Cardiac septum (tissue), 1 donor: ENCODE measurements at regions of chr2 and their contacts with region 1.

Region 1: DNA sequence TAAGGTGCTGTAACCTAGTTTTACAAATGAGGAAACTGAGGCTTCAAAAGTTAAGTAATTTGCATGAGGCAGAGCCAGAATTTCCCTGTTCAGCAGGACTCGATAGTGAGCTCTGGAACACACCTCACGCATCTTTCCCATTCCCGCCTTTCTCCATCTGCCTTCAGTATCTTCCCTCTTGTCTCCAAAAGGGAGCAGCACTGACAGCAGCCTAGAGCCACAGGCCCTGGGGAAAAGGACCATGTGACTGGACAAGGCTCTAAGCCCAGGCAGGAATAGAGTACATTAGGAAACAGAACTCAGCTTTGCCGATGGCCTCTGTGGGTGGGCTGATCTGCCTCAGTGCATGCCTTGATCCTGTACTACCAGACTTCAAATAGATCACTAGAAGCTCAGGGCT is 21.5 kb downstream of the GPR155 start:
- DNase-seq: no peak

Region 2: DNA sequence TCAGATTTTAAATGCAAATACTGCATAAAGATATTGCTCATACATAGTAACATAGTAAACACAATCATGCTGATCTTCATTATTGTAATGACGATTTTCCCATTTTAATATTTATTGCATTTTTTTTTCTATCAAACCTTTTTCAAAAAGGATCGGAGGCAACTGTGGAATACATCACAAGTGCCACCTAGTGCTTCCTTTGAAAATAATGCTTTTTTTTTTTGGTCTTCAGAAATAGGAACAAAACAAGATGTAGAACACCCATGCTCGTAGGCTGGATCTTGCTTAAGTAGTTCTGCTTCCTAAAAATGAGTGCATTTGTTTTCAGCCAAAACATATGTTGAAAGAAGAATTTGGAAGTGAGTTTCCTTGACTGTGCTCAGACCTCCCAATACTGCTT is 57.2 kb after region 1 on chr2:
- intact Hi-C with region 1: loop called (anchors 5 kb)
- DNase-seq: no peak

Region 3: GRCh38 chr2:174536304-174536703 is 71.0 kb after region 1 on chr2:
- intact Hi-C with region 1: no loop called
- DNase-seq: no peak

Region 4: DNA sequence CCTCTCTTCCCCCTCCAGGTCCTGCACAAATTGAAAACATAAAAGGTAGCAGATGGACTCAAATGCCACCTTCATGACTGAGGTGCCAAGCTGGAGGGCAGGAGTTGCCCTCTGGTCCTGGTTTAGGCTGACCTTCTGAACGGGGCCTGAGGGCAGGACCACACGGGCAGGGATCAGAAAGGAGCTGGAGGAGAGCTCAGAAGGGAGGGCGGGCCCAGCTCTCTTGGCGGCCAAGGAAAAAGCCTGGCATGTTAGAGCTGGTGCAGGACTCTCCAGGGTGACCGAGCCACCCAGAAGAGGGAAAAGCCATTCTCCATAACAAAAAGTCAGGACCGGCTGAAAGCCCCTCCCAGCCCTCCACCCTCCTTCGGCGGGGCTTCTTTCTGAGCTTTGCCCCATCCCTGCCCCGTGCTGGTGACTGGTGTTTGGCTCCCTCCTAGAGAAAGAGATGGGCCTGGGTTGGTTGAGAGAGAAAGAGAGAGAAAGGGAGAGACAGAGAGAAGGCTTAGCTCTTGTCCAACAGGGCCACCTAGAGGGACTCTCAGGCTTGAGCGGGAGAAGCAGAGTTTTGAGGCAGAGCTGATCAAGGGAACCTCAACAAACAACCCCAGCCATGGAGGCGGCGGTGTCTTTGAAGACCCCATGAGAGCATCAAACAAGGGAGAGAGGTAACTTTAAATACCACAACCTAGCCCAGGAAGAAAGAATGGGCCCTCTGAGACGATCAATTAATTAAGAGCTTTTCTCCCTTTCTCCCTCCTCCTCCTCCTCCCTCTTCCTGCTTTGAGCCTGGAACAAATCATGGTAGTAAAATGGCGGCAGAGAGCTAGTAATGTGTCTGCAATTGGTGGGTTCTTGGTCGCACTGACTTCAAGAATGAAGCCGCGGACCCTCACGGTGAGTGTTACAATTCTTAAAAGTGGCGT is 81.5 kb after region 1 on chr2:
- intact Hi-C with region 1: loop called (anchors 5 kb)
- DNase-seq: no peak

Region 5: GRCh38 chr2:174603280-174603679 is 138.0 kb after region 1 on chr2:
- intact Hi-C with region 1: loop called (anchors 2 kb)
- DNase-seq: no peak

Region 6: DNA sequence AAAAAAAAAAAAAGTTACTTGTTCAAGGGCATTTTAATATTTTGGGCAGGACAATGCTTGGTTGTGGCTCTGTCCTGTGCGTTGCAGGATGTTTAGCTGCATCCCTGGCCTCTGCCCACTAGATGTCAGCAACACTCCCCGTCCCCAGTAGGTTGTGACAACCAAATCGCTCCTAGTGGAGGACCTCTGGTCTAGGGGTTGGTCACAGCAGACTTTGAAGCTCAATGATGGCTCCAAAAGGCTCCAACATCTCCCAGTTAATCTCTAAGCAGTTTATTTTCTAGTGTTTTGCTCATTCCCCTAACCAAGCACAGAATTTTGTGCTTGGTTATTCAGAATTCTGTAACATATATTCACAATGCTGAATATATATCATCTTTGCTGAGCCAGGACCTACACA is 231.9 kb after region 1 on chr2:
- intact Hi-C with region 1: loop called (anchors 5 kb)
- DNase-seq: no peak